ENCODE measurements at regions of chr4 and their contacts with region 1.

Region 1: DNA sequence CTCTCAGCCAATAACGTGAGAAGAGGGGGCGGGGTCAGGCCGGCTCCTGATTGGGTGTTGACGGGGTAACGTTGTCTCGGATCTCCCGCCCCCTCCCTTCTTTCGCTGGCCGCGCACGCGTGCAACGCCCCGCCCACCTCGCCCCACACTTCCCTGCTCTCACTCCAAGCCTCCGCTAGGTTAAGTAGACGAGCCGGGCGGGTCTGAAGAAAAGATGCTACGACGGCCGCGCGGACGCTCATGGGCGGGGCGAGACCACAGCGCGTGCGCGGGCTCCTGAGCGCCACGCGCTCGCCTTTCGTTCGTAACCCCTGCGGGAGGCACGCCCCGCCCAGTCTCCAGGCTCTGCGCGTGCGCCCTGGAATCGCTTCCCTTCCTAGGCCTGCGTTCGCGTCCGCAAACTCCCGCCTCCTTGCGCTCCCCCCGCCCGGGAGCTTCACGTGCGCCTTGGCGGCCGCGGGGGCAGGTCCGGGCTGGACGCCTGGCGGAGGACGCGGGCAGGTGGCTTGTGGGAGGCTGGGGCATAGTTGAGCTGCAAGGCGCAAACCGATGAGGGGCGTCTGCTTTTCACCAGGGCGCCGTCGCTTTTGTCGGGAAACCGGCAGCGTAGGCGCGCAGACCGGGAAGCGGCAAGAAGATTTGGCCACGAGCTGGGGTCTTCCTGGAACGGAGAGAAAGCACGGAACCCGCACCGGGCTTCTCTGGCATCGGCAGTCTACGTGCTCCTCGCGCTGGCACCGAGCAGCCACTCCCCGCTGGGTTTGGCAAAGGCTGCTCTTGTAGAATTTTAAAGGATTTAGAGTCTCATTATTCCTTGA is 467 bp upstream of the PGRMC2 start:
- DNase-seq: peak; percentile 97
- ATAC-seq: peak; percentile 88
- H3K4me3 Mint-ChIP-seq: peak overlapping the region; percentile 83
- H3K27ac Mint-ChIP-seq: peak overlapping the region; percentile 80
- H3K4me1 Mint-ChIP-seq: peaks cover 29% of the 10 kb centered on the region
- H3K27me3 Mint-ChIP-seq: no peaks in the 10 kb centered on the region
- CTCF ChIP-seq: no peak

Region 2: GRCh38 chr4:127782274-127783025 is 505.6 kb before region 1 on chr4 and contains the start of gene HSPA4L:
- CTCF ChIA-PET with region 1: no interaction called
- POLR2A ChIA-PET with region 1: no interaction called
- intact Hi-C with region 1: loop called (anchors 5 kb)
- DNase-seq: peak; percentile 44
- ATAC-seq: peak; percentile 84
- H3K4me3 Mint-ChIP-seq: peak within 1 kb of the TSS; percentile 88
- H3K27ac Mint-ChIP-seq: peak within 1 kb of the TSS; percentile 38
- H3K4me1 Mint-ChIP-seq: peaks cover 19% of the 10 kb centered on the region
- H3K27me3 Mint-ChIP-seq: peaks cover 48% of the 10 kb centered on the region
- CTCF ChIP-seq: no peak
- total RNA-seq, gene HSPA4L: 0.07 and 0.13 TPM in 2 replicates

Region 3: DNA sequence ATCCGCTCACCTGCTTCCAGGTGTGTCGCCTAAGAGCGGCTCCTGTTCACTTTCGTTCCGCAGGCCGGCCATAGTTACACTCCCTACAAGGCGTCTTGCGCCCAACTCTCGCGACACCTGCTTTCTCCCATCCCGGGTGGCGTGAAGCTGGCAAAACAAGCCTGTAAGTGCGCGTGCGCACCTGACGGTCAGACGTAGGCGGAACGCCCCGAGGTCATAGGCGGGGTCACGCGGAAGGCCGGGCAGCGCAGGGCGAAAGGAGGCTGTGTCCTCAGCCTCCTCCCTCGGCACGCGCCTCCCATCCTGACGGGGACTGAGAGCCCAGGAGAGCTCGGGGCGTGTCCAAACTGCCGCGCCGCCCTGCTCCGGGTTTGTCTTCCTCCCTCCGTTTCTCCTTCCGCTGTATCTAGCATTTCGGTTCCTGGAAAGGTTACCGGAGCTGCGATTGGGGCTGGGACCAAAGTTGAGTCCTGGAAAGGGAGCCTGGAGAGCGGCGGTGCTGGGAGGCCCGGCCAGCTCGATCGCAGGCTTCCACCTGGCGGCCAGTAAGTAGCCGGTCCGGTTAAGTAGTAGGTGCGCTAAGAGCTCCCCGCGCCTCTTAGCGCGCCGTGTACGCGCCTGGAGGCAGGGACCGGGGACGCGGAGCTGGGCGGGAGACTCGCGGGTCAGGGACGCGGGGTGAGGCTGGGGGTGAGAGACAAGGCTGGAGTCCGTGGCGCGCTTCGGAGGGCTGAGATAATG is 322.8 kb before region 1 on chr4 and contains the starts of genes ABHD18 and MFSD8:
- CTCF ChIA-PET with region 1: no interaction called
- POLR2A ChIA-PET with region 1: interaction called, 26 read pairs
- intact Hi-C with region 1: loop called (anchors 1 kb)
- DNase-seq: peak; percentile 96
- ATAC-seq: peak; percentile 96
- H3K4me3 Mint-ChIP-seq: peak within 1 kb of the TSS; percentile 98
- H3K27ac Mint-ChIP-seq: peak within 1 kb of the TSS; percentile 96
- H3K4me1 Mint-ChIP-seq: peaks cover 34% of the 10 kb centered on the region
- H3K27me3 Mint-ChIP-seq: no peaks in the 10 kb centered on the region
- CTCF ChIP-seq: no peak
- total RNA-seq, gene ABHD18: 12.8 and 13.9 TPM in 2 replicates
- total RNA-seq, gene MFSD8: 30.8 and 31.1 TPM in 2 replicates

Region 4: GRCh38 chr4:128060699-128061565 is 227.1 kb before region 1 on chr4 and contains the start of gene LARP1B:
- CTCF ChIA-PET with region 1: no interaction called
- POLR2A ChIA-PET with region 1: interaction called, 12 read pairs
- intact Hi-C with region 1: loop called (anchors 1 kb)
- DNase-seq: peak; percentile 95
- ATAC-seq: peak; percentile 89
- H3K4me3 Mint-ChIP-seq: peak within 1 kb of the TSS; percentile 84
- H3K27ac Mint-ChIP-seq: peak within 1 kb of the TSS; percentile 90
- H3K4me1 Mint-ChIP-seq: peaks cover 10% of the 10 kb centered on the region
- H3K27me3 Mint-ChIP-seq: no peaks in the 10 kb centered on the region
- CTCF ChIP-seq: no peak
- total RNA-seq, gene LARP1B: 10.7 and 11.5 TPM in 2 replicates

Region 5: DNA sequence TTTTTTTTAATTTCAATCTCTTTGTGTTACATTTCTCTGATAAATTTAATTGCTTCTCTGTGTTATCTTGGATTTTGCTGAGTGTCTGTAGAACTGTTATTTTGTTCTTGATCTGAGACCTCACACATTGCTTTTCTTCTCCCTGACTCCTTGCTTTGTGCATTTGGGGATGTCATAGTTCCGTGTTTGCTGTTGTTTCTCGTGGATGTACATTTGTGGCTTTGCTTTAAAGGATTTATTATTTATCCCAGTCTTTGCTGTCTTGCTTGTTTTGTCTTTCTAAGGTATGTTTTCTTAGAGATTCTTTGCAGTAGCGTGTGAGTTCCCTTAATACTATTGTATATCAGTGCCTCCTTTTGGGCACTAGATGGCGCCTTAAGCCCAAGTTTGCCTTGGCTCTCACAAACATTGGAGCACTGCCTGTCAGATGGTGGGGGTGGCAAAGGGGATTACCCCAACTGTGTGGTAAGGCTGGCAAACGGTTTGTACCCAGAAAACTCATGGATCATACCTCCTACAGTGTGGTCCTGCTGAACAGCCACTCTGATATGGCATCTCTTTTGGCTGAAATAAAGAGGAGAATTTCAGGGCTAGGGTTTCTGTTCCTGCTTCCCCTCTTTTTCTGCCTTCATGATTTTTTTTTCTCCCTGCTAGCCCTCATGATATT is 96.8 kb before region 1 on chr4:
- CTCF ChIA-PET with region 1: no interaction called
- POLR2A ChIA-PET with region 1: no interaction called
- intact Hi-C with region 1: loop called (anchors 5 kb)
- DNase-seq: peak; percentile 31
- ATAC-seq: peak; percentile 92
- H3K4me3 Mint-ChIP-seq: no peak overlapping the region
- H3K27ac Mint-ChIP-seq: no peak overlapping the region
- H3K4me1 Mint-ChIP-seq: no peaks in the 10 kb centered on the region
- H3K27me3 Mint-ChIP-seq: no peaks in the 10 kb centered on the region
- CTCF ChIP-seq: peak; percentile 79

Region 6: DNA sequence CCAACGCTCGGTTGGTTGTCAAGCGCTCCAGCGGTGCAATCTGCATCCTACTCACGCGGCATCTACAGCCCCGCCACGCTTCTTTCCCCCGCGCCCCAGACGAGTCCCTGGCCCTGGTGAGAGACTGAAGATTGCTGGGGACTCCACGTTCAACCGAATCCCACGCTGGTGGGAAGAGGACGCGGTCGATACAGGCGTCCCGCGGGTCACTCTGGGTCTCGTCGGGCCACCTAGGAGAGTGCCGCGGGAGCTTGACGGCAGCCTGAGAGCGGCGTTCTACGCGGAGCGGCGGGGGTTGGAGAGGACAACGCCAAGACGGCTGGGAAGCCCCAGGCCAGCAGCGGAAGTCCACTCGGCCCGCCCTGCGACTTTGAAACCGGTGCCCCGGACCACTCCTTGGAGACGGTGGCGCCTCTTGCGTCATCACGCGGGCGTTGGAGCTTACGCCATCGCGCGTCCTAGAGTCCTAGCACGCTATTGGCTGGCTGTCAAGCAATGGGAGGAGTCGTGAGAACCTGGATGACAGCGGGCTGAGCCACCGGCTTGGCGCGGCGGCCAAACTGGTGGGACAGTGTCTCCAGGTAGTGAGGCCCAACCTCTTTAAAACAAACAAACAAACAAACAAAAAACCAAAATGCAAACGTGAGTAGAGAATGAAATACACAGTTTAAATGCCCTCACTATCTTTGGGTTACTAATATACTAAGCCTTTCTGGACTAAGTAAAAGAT is 805.3 kb after region 1 on chr4 and contains the start of gene SCLT1:
- CTCF ChIA-PET with region 1: no interaction called
- POLR2A ChIA-PET with region 1: no interaction called
- intact Hi-C with region 1: loop called (anchors 1 kb)
- DNase-seq: peak; percentile 94
- ATAC-seq: peak; percentile 92
- H3K4me3 Mint-ChIP-seq: no peak within 1 kb of the TSS
- H3K27ac Mint-ChIP-seq: no peak within 1 kb of the TSS
- H3K4me1 Mint-ChIP-seq: peaks cover 45% of the 10 kb centered on the region
- H3K27me3 Mint-ChIP-seq: no peaks in the 10 kb centered on the region
- CTCF ChIP-seq: no peak
- total RNA-seq, gene SCLT1: 24.5 and 25.0 TPM in 2 replicates

Measured in activated B cell treated with CpG ODN at 0.5 μM for 24 hours (primary cell).